GM12878 (cell line): ENCODE measurements at regions of chr5 and their contacts with region 1.

Region 1: GRCh38 chr5:107571621-107572536 is 98.9 kb downstream of the EFNA5 start:
- DNase-seq: peak; percentile 83
- ATAC-seq: peak; percentile 88
- H3K4me3 ChIP-seq: peak overlapping the region; percentile 64
- H3K27ac ChIP-seq: peak overlapping the region; percentile 95
- H3K4me1 ChIP-seq: peaks cover 27% of the 10 kb centered on the region
- H3K27me3 ChIP-seq: no peaks in the 10 kb centered on the region
- CTCF ChIP-seq: peak; percentile 92 to 94 (median 94)
- EP300 ChIP-seq: no peak
- POLR2A ChIP-seq: peak; percentile 63
- RAD21 ChIP-seq: peak; percentile 89

Region 2: GRCh38 chr5:107104040-107104995 is 467.6 kb before region 1 on chr5:
- CTCF ChIA-PET with region 1: interaction called, 34 read pairs
- POLR2A ChIA-PET with region 1: no interaction called
- RAD21 ChIA-PET with region 1: interaction called, 30 read pairs
- SMC1A ChIA-PET with region 1: interaction called, 18 read pairs
- in situ Hi-C with region 1: no loop called
- intact Hi-C with region 1: loop called (anchors 1 kb)
- DNase-seq: peak; percentile 28
- ATAC-seq: peak; percentile 96
- H3K4me3 ChIP-seq: no peak overlapping the region
- H3K27ac ChIP-seq: no peak overlapping the region
- H3K4me1 ChIP-seq: no peaks in the 10 kb centered on the region
- H3K27me3 ChIP-seq: no peaks in the 10 kb centered on the region
- CTCF ChIP-seq: peak; percentile 18 to 81 (median 52); a peak in 4 of 6 replicates
- EP300 ChIP-seq: no peak
- POLR2A ChIP-seq: no peak
- RAD21 ChIP-seq: peak; percentile 61

Region 3: DNA sequence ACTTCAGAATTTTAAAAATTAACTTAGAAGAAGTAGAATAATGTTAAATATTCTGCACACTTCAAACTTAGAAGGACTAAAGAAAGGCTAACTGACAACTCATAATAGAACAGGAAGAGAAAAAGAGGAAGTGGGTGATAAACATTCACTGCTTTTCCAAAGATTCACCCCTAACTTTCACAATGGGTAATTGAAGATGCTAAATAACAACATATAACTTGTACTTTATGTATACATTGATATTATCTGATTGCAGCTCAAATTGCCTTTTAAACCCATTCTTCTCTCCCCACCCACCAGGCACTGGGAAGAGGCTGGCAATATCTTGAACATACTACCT is 277.7 kb before region 1 on chr5:
- CTCF ChIA-PET with region 1: interaction called, 8 read pairs
- POLR2A ChIA-PET with region 1: interaction called, 5 read pairs
- RAD21 ChIA-PET with region 1: interaction called, 10 read pairs
- SMC1A ChIA-PET with region 1: interaction called, 8 read pairs
- in situ Hi-C with region 1: no loop called
- intact Hi-C with region 1: loop called (anchors 5 kb)
- DNase-seq: peak; percentile 66
- ATAC-seq: peak; percentile 69
- H3K4me3 ChIP-seq: no peak overlapping the region
- H3K27ac ChIP-seq: no peak overlapping the region
- H3K4me1 ChIP-seq: peaks cover 20% of the 10 kb centered on the region
- H3K27me3 ChIP-seq: no peaks in the 10 kb centered on the region
- CTCF ChIP-seq: no peak
- EP300 ChIP-seq: peak; percentile 66 to 96; a peak in 3 of 4 replicates
- POLR2A ChIP-seq: no peak
- RAD21 ChIP-seq: no peak

Region 4: GRCh38 chr5:107389130-107389774 is 182.6 kb before region 1 on chr5:
- CTCF ChIA-PET with region 1: interaction called, 33 read pairs
- POLR2A ChIA-PET with region 1: interaction called, 5 read pairs
- RAD21 ChIA-PET with region 1: interaction called, 44 read pairs
- SMC1A ChIA-PET with region 1: interaction called, 34 read pairs
- in situ Hi-C with region 1: no loop called
- intact Hi-C with region 1: loop called (anchors 1 kb)
- DNase-seq: peak; percentile 92
- ATAC-seq: peak; percentile 82
- H3K4me3 ChIP-seq: peak overlapping the region; percentile 43
- H3K27ac ChIP-seq: peak overlapping the region; percentile 69
- H3K4me1 ChIP-seq: peaks cover 22% of the 10 kb centered on the region
- H3K27me3 ChIP-seq: no peaks in the 10 kb centered on the region
- CTCF ChIP-seq: peak in 1 of 3 experiments; percentile 27; a peak in 1 of 6 replicates
- EP300 ChIP-seq: peak; percentile 89 to 90; a peak in 2 of 4 replicates
- POLR2A ChIP-seq: no peak
- RAD21 ChIP-seq: peak; percentile 50

Region 5: DNA sequence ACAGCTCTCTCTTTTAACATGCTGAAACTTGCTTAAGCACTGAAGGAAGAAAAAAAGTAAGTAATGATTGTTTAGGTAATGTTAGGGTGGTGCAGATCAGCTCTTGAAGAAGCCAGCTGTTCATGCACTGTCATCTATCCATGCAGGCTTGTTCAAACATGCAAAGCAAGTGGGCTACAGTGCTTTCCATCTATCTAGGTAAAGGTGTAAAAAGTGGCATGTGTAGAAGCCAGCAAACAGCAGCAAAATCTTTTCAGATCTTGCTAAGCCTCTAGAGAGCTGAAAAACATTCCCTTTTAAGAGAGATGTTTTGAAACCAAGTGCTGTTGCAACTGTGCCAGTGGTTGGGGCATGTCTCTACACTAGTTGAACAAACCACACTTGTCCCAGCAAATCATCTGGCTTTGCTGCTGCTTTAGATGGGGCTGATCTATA is 115.6 kb before region 1 on chr5:
- CTCF ChIA-PET with region 1: interaction called, 17 read pairs
- POLR2A ChIA-PET with region 1: no interaction called
- RAD21 ChIA-PET with region 1: interaction called, 25 read pairs
- SMC1A ChIA-PET with region 1: interaction called, 27 read pairs
- in situ Hi-C with region 1: no loop called
- intact Hi-C with region 1: no loop called
- DNase-seq: peak; percentile 79
- ATAC-seq: peak; percentile 76
- H3K4me3 ChIP-seq: no peak overlapping the region
- H3K27ac ChIP-seq: peak overlapping the region; percentile 15; the same call in 1 of the 2 replicates
- H3K4me1 ChIP-seq: peaks cover 4% of the 10 kb centered on the region
- H3K27me3 ChIP-seq: no peaks in the 10 kb centered on the region
- CTCF ChIP-seq: no peak
- EP300 ChIP-seq: no peak
- POLR2A ChIP-seq: no peak
- RAD21 ChIP-seq: no peak

Region 6: DNA sequence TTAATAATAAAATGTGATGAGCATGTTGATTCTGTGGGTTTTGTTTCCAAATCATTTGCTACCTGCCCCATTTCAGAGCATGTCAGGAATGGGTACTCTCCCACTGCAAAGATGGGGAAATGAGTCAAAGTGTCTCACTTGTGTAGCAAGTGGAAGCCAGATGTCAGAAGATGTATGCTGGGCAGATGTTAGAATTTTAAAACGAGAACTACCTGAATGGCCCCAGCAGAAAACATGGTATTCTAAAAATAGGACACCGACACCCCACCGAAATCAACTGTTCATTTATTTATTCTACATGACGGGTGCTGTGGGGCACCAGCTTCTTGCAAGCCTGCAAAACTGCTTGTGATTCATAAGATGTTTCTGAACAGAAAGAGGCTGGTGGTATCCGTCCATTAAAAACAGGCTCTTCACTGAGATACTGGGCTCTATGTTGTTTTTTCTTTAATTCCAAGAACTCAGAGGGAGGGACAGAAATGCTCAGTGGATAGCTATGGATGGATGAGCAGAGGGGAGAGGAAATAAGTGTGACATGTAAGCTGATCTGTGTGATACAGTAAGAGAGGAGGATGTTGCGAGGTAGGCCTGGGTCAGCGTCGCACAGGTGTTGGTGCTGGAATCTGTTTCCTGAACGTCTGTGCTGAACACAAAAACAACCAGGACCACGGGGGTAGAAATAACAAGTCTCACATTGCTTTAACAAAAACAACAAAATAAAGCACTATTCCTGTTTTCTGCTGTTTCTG is 58.4 kb before region 1 on chr5:
- CTCF ChIA-PET with region 1: interaction called, 6 read pairs
- POLR2A ChIA-PET with region 1: interaction called, 3 read pairs
- RAD21 ChIA-PET with region 1: interaction called, 11 read pairs
- SMC1A ChIA-PET with region 1: interaction called, 5 read pairs
- in situ Hi-C with region 1: no loop called
- intact Hi-C with region 1: no loop called
- DNase-seq: peak; percentile 39
- ATAC-seq: peak; percentile 44
- H3K4me3 ChIP-seq: 0 out of 2 replicates have a peak overlapping the region, but pooled peaks have one; percentile 11
- H3K27ac ChIP-seq: peak overlapping the region; percentile 49
- H3K4me1 ChIP-seq: peaks cover 10% of the 10 kb centered on the region
- H3K27me3 ChIP-seq: no peaks in the 10 kb centered on the region
- CTCF ChIP-seq: no peak
- EP300 ChIP-seq: no peak
- POLR2A ChIP-seq: no peak
- RAD21 ChIP-seq: no peak

Region 7: GRCh38 chr5:107604832-107605389 is 33.0 kb after region 1 on chr5:
- CTCF ChIA-PET with region 1: interaction called, 8 read pairs
- POLR2A ChIA-PET with region 1: no interaction called
- RAD21 ChIA-PET with region 1: interaction called, 7 read pairs
- SMC1A ChIA-PET with region 1: interaction called, 12 read pairs
- in situ Hi-C with region 1: no loop called
- intact Hi-C with region 1: no loop called
- DNase-seq: no peak
- ATAC-seq: 0 out of 3 replicates have a peak, but pooled peaks have one; percentile 21
- H3K4me3 ChIP-seq: no peak overlapping the region
- H3K27ac ChIP-seq: no peak overlapping the region
- H3K4me1 ChIP-seq: no peaks in the 10 kb centered on the region; the same call in 1 of the 2 replicates
- H3K27me3 ChIP-seq: no peaks in the 10 kb centered on the region
- CTCF ChIP-seq: no peak
- EP300 ChIP-seq: no peak
- POLR2A ChIP-seq: no peak
- RAD21 ChIP-seq: no peak